ENCODE measurements at regions of chr17 and their contacts with region 1.

Region 1: GRCh38 chr17:41738077-41738735 is 3.8 kb upstream of the HAP1 start:
- DNase-seq: peak; percentile 86
- ATAC-seq: peak; percentile 54
- H3K4me3 ChIP-seq: no peak overlapping the region
- H3K27ac ChIP-seq: peak overlapping the region; percentile 91
- H3K4me1 ChIP-seq: peaks cover 31% of the 10 kb centered on the region
- H3K27me3 ChIP-seq: no peaks in the 10 kb centered on the region
- CTCF ChIP-seq: peak; percentile 89

Region 2: DNA sequence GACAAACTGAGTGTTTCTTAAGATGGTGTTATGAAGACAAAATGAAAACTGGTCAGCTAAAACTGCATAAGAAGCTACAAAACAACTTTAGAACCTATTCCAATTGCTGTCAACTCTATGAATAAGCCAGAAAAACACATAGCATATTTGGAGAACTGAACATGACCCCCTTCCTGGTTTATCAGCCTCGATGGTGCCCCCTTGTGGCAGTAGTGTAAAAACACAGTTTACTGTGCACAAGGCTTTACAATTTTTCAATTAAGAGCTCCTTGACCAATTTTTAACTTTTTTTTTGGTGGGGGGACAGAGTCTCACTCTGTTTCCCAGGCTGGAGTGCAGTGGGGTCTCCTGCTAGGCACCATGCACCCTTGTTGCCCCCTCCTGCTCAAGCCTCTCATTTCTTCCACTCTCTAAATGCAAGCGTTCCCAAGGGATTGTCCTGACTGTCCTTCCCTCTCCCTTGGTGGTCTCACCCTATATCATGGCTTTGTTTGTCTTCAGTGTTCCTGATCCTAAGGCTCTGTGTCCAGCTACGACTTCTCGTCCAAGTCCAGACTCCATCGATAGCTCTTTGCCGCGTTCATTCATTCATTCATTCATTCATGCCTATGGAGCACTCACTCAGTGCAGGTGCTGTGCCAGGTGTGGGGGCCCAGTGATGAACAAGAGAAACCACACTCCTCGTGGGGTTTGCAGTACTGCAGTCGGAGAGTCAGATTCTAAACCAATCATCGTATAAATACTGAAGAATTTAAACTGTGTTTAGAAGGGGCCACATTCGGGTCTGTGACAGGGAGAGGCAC is 42.1 kb before region 1 on chr17:
- CTCF ChIA-PET with region 1: no interaction called
- POLR2A ChIA-PET with region 1: no interaction called
- intact Hi-C with region 1: no loop called
- DNase-seq: peak; percentile 73
- ATAC-seq: peak; percentile 57
- H3K4me3 ChIP-seq: no peak overlapping the region
- H3K27ac ChIP-seq: no peak overlapping the region
- H3K4me1 ChIP-seq: no peaks in the 10 kb centered on the region
- H3K27me3 ChIP-seq: no peaks in the 10 kb centered on the region
- CTCF ChIP-seq: peak; percentile 79

Region 3: DNA sequence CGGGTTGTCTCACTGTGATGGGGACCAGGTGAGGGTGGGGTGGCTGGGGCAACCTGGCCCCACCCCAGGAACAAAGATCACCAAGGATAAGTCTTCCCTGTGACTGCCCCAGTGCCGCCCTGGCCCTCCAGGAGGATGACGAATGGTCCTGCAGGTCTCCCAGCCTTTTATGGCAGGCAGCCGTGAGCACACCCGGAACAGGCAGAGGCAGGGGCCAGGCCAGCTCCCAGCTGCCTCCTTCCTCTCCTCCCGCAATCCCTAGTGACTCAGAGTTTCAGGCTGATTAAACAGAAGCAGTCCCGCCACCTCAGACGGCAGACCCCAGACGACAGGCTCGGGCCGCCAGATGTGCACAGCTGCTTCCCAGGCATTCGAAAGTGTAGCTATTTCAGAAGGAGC is 35.0 kb after region 1 on chr17:
- CTCF ChIA-PET with region 1: no interaction called
- POLR2A ChIA-PET with region 1: no interaction called
- intact Hi-C with region 1: loop called (anchors 1 kb)
- DNase-seq: peak; percentile 92
- ATAC-seq: peak; percentile 80
- H3K4me3 ChIP-seq: no peak overlapping the region
- H3K27ac ChIP-seq: peak overlapping the region; percentile 93
- H3K4me1 ChIP-seq: peaks cover 55% of the 10 kb centered on the region
- H3K27me3 ChIP-seq: no peaks in the 10 kb centered on the region
- CTCF ChIP-seq: no peak

Region 4: DNA sequence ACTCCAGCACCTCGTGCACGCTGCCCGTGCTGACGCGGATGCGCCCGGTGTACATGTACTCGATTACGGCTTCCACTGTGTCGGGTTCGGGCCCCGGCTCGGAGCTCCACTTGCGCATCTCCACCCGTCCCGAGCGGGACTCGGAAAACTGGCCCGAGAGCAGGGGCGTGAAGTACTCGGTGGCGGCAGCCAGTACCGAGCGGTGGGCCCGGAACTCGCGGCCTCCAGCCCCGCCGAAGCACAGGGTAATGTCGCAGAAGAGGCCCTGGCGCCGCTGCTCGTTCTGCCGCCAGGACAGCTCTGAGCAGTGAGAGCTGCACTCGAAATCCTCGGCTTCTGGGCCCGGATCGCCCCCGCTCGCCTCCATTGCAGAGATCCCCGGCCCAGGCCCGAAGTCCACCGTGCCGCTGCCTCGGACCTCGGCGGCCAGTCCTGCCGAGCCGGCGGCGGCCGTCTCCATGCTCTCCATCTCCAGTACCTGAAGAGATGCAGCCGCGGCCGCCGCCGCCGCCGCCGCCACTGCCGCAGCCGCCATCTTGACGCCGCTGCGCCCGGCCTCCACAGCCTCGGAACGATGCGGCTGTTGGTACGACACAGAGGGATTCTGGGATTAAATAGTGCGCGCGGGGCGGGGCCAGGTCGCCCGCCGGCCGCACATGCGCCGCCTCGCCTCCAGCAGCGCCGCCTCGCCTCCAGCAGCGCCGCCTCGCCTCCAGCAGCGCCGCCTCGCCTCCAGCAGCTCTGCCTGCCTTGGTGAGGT is 126.8 kb after region 1 on chr17 and contains the start of gene KLHL11:
- CTCF ChIA-PET with region 1: no interaction called
- POLR2A ChIA-PET with region 1: no interaction called
- intact Hi-C with region 1: loop called (anchors 5 kb)
- DNase-seq: peak; percentile 80
- ATAC-seq: peak; percentile 94
- H3K4me3 ChIP-seq: peak within 1 kb of the TSS; percentile 84
- H3K27ac ChIP-seq: peak within 1 kb of the TSS; percentile 20; the same call in 1 of the 2 replicates
- H3K4me1 ChIP-seq: 0 out of 2 replicates have a peak, but pooled peaks cover 6% of the 10 kb centered on the region
- H3K27me3 ChIP-seq: no peaks in the 10 kb centered on the region
- CTCF ChIP-seq: no peak
- total RNA-seq, gene KLHL11: 16.5 and 19.9 TPM in 2 replicates

Region 5: DNA sequence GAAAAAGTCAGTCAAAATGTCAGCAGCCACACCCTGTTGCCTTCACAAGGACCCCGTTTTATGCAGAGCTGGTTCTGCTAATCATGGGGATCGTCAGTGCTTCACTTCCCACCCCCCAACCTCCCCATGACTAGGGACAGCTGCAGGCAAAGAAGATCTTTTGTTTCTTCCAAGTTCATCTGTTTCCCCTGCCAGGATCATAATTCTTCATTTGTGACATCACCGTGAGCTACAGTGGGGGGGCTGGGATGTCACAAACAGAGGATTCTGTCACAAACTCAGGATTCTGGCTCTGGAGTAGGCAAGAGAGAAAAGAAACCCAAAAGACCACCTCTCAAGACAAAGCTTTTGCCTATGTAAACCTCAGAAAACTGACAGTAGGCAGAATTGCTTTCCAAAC is 254.4 kb after region 1 on chr17:
- CTCF ChIA-PET with region 1: no interaction called
- POLR2A ChIA-PET with region 1: no interaction called
- intact Hi-C with region 1: no loop called
- DNase-seq: no peak
- ATAC-seq: no peak
- H3K4me3 ChIP-seq: no peak overlapping the region
- H3K27ac ChIP-seq: no peak overlapping the region
- H3K4me1 ChIP-seq: peaks cover 13% of the 10 kb centered on the region
- H3K27me3 ChIP-seq: no peaks in the 10 kb centered on the region
- CTCF ChIP-seq: no peak

Measured in PC-3 (cell line).